Sigmoid colon (tissue), 7 donors: ENCODE measurements at regions of chrX and their contacts with region 1.

Region 1: GRCh38 chrX:131710431-131711045 is 166.7 kb downstream of the OR13H1 start:
- DNase-seq: no peak
- H3K4me3 ChIP-seq: no peak overlapping the region
- H3K27ac ChIP-seq: peak overlapping the region in 2 of 4 donors; percentile 24 to 56
- H3K4me1 ChIP-seq: no peaks in the 10 kb centered on the region
- H3K27me3 ChIP-seq: no peaks in the 10 kb centered on the region
- CTCF ChIP-seq: no peak
- EP300 ChIP-seq: no peak
- POLR2A ChIP-seq: no peak

Region 2: GRCh38 chrX:131728295-131729145 is 18.0 kb after region 1 on chrX:
- intact Hi-C with region 1: loop called (anchors 2 kb)
- DNase-seq: peak; percentile 91
- H3K4me3 ChIP-seq: peak overlapping the region in 2 of 4 donors; percentile 28 to 49
- H3K27ac ChIP-seq: peak overlapping the region in 2 of 4 donors; percentile 84 to 85
- H3K4me1 ChIP-seq: peaks cover 0 to 3% (median 0%) of the 10 kb centered on the region in 4 donors
- H3K27me3 ChIP-seq: no peaks in the 10 kb centered on the region
- CTCF ChIP-seq: peak in 1 of 4 experiments; percentile 67
- EP300 ChIP-seq: no peak
- POLR2A ChIP-seq: no peak